K562 (cell line): ENCODE measurements at regions of chr6 and their contacts with region 1.

Region 1: GRCh38 chr6:51855310-51856082 is 231.9 kb downstream of the PKHD1 start:
- DNase-seq: peak; percentile 47 to 74 (median 61)
- ATAC-seq: peak; percentile 96
- H3K4me3 ChIP-seq: no peak overlapping the region
- H3K27ac ChIP-seq: no peak overlapping the region
- H3K4me1 ChIP-seq: no peaks in the 10 kb centered on the region
- H3K27me3 ChIP-seq: no peaks in the 10 kb centered on the region
- CTCF ChIP-seq: peak; percentile 66 to 76 (median 69)
- EP300 ChIP-seq: no peak
- POLR2A ChIP-seq: no peak
- RAD21 ChIP-seq: peak; percentile 72 to 74

Region 2: GRCh38 chr6:51479296-51479695 is 376.2 kb before region 1 on chr6:
- CTCF ChIA-PET with region 1: no interaction called
- POLR2A ChIA-PET with region 1: no interaction called
- in situ Hi-C with region 1: no loop called
- intact Hi-C with region 1: no loop called
- DNase-seq: no peak
- ATAC-seq: no peak
- H3K4me3 ChIP-seq: no peak overlapping the region
- H3K27ac ChIP-seq: no peak overlapping the region
- H3K4me1 ChIP-seq: no peaks in the 10 kb centered on the region
- H3K27me3 ChIP-seq: no peaks in the 10 kb centered on the region
- CTCF ChIP-seq: no peak
- EP300 ChIP-seq: no peak
- POLR2A ChIP-seq: no peak
- RAD21 ChIP-seq: no peak

Region 3: GRCh38 chr6:51830666-51831065 is 24.8 kb before region 1 on chr6:
- CTCF ChIA-PET with region 1: no interaction called
- POLR2A ChIA-PET with region 1: no interaction called
- in situ Hi-C with region 1: no loop called
- intact Hi-C with region 1: no loop called
- DNase-seq: no peak
- ATAC-seq: no peak
- H3K4me3 ChIP-seq: no peak overlapping the region
- H3K27ac ChIP-seq: no peak overlapping the region
- H3K4me1 ChIP-seq: no peaks in the 10 kb centered on the region
- H3K27me3 ChIP-seq: no peaks in the 10 kb centered on the region
- CTCF ChIP-seq: no peak
- EP300 ChIP-seq: no peak
- POLR2A ChIP-seq: no peak
- RAD21 ChIP-seq: no peak

Region 4: DNA sequence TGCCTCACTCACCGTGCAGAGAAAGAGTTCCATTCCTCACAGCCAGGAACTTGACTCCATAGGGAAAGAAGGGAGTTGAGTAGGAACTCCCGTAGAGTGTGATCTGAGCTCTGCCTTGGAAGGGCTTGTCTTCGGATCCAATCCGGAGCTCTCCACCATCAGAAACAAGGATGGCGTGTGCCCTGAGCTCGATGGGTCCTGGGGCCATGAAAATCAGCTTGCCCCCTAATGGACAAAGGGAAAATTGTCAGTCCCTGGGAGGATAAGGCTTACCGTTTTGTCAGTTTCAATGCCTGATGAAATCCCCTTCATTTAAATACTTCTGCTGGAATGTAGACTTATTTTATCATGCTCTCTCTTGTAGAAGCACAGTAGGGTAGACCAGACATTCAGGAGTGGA is 78.6 kb after region 1 on chr6:
- CTCF ChIA-PET with region 1: no interaction called
- POLR2A ChIA-PET with region 1: no interaction called
- in situ Hi-C with region 1: no loop called
- intact Hi-C with region 1: loop called (anchors 1 kb)
- DNase-seq: peak; percentile 14 to 44 (median 28)
- ATAC-seq: peak; percentile 94
- H3K4me3 ChIP-seq: no peak overlapping the region
- H3K27ac ChIP-seq: no peak overlapping the region
- H3K4me1 ChIP-seq: no peaks in the 10 kb centered on the region
- H3K27me3 ChIP-seq: no peaks in the 10 kb centered on the region
- CTCF ChIP-seq: peak; percentile 41 to 63 (median 55)
- EP300 ChIP-seq: no peak
- POLR2A ChIP-seq: no peak
- RAD21 ChIP-seq: no peak

Region 5: DNA sequence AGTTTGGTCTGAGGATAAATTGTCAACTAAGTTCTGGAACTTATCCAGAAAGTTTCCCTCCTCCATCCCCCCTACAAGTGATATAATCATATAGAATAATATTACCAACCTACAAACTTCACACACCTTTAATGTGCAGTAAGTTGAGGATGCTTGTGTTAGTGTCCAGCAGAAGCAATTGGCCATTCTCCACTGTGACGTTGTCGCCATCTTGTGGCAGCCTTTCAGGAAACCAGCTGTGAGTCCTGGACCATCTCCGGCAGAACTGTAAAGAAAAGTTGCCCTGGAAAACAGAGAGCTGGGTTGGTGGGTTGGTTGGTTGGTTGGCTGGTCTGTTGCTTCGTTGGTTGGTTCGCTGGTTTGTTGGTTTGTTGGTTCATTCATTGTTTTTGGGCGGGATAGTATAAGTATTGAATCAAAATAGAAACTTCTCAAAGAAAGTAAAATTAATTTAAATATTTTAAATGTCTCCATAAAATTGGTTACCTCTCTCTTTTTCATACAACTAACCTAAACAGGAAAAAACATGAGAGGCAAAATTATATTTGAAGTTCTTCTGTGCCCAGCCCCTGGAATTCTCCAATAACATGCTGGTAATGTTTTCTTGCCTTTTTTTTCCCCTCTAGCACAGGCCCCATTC is 104.4 kb after region 1 on chr6:
- CTCF ChIA-PET with region 1: interaction called, 7 read pairs
- POLR2A ChIA-PET with region 1: no interaction called
- in situ Hi-C with region 1: no loop called
- intact Hi-C with region 1: loop called (anchors 1 kb)
- DNase-seq: peak; percentile 50 to 77 (median 58)
- ATAC-seq: peak; percentile 94
- H3K4me3 ChIP-seq: no peak overlapping the region
- H3K27ac ChIP-seq: no peak overlapping the region
- H3K4me1 ChIP-seq: no peaks in the 10 kb centered on the region
- H3K27me3 ChIP-seq: no peaks in the 10 kb centered on the region
- CTCF ChIP-seq: peak; percentile 80 to 84 (median 82)
- EP300 ChIP-seq: no peak
- POLR2A ChIP-seq: no peak
- RAD21 ChIP-seq: peak; percentile 65 to 85